Activated B cell treated with CpG ODN at 0.5 μM for 24 hours (primary cell): ENCODE measurements at regions of chr15 and their contacts with region 1.

Region 1: DNA sequence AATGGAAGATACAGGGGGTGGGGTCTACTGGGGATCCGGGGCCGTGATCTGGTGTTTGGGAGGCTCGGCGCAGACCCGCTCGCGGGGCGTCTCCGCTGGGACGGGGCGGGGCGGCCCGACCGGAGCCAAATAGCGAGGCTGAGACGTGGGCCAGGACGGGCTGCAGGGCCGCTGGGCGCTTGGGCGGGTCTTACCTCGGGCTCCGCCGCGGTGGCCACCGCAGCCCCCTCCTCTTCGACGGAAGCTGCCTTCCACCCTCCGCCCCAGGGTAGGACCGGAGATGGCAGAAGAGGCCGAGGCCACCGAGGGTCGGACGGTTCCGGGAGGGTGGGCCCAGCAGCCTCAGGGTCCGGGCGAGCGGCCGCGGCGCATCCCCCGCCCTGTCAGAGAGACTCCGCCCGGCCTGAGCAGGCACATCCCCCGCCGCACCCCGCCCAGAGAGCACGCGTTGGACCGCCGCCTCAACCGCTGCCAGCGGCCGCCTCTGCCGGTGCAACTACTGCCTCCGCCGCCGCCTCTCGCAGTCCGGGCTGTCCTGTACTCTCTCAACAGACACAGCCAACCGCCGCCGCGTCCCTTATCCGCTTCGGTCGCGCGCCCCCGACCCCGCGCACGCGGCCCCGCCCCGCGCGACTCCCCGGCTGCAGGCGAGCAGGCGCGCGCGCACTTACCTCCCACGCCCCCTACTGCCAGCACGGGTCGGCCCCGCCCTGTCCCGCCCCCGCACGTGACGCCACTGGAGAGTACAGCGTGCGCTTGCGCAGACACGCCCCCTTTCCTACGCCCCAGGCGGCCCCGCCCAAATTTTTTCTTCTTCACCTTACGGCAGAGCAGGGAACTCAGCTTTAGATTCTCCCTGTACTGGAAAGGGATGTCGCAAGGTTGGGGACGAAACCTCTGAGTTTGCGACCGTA is at the start of gene MYO9A:
- DNase-seq: peak; percentile 93
- ATAC-seq: peak; percentile 74
- H3K4me3 Mint-ChIP-seq: peak within 1 kb of the TSS; percentile 99
- H3K27ac Mint-ChIP-seq: peak within 1 kb of the TSS; percentile 99
- H3K4me1 Mint-ChIP-seq: peaks cover 33% of the 10 kb centered on the region
- H3K27me3 Mint-ChIP-seq: no peaks in the 10 kb centered on the region
- CTCF ChIP-seq: no peak
- total RNA-seq, gene MYO9A: 39.4 and 50.6 TPM in 2 replicates

Region 2: GRCh38 chr15:72009222-72009621 is 108.5 kb before region 1 on chr15:
- CTCF ChIA-PET with region 1: no interaction called
- POLR2A ChIA-PET with region 1: no interaction called
- intact Hi-C with region 1: loop called (anchors 5 kb)
- DNase-seq: no peak
- ATAC-seq: no peak
- H3K4me3 Mint-ChIP-seq: no peak overlapping the region
- H3K27ac Mint-ChIP-seq: no peak overlapping the region
- H3K4me1 Mint-ChIP-seq: peaks cover 22% of the 10 kb centered on the region
- H3K27me3 Mint-ChIP-seq: no peaks in the 10 kb centered on the region
- CTCF ChIP-seq: no peak

Region 3: GRCh38 chr15:72057548-72058091 is 60.1 kb before region 1 on chr15:
- CTCF ChIA-PET with region 1: no interaction called
- POLR2A ChIA-PET with region 1: no interaction called
- intact Hi-C with region 1: no loop called
- DNase-seq: no peak
- ATAC-seq: no peak
- H3K4me3 Mint-ChIP-seq: no peak overlapping the region
- H3K27ac Mint-ChIP-seq: no peak overlapping the region
- H3K4me1 Mint-ChIP-seq: peaks cover 12% of the 10 kb centered on the region
- H3K27me3 Mint-ChIP-seq: no peaks in the 10 kb centered on the region
- CTCF ChIP-seq: no peak

Region 4: GRCh38 chr15:72141171-72142084 is 23.7 kb after region 1 on chr15:
- CTCF ChIA-PET with region 1: no interaction called
- POLR2A ChIA-PET with region 1: interaction called, 12 read pairs
- intact Hi-C with region 1: no loop called
- DNase-seq: no peak
- ATAC-seq: peak; percentile 94
- H3K4me3 Mint-ChIP-seq: peak overlapping the region; percentile 44
- H3K27ac Mint-ChIP-seq: peak overlapping the region; percentile 87
- H3K4me1 Mint-ChIP-seq: peaks cover 15% of the 10 kb centered on the region
- H3K27me3 Mint-ChIP-seq: no peaks in the 10 kb centered on the region
- CTCF ChIP-seq: no peak

Region 5: GRCh38 chr15:72272213-72273002 is 154.7 kb after region 1 on chr15 and contains the start of gene PARP6:
- CTCF ChIA-PET with region 1: no interaction called
- POLR2A ChIA-PET with region 1: no interaction called
- intact Hi-C with region 1: loop called (anchors 1 kb)
- DNase-seq: peak; percentile 95
- ATAC-seq: peak; percentile 96
- H3K4me3 Mint-ChIP-seq: peak within 1 kb of the TSS; percentile 87
- H3K27ac Mint-ChIP-seq: peak within 1 kb of the TSS; percentile 86
- H3K4me1 Mint-ChIP-seq: peaks cover 36% of the 10 kb centered on the region
- H3K27me3 Mint-ChIP-seq: no peaks in the 10 kb centered on the region
- CTCF ChIP-seq: no peak
- total RNA-seq, gene PARP6: 70.7 and 81.4 TPM in 2 replicates

Region 6: GRCh38 chr15:72319985-72320671 is 202.4 kb after region 1 on chr15 and contains the start of gene CELF6:
- CTCF ChIA-PET with region 1: no interaction called
- POLR2A ChIA-PET with region 1: no interaction called
- intact Hi-C with region 1: loop called (anchors 2 kb)
- DNase-seq: peak; percentile 77
- ATAC-seq: peak; percentile 81
- H3K4me3 Mint-ChIP-seq: peak within 1 kb of the TSS; percentile 86
- H3K27ac Mint-ChIP-seq: peak within 1 kb of the TSS; percentile 47
- H3K4me1 Mint-ChIP-seq: peaks cover 18% of the 10 kb centered on the region
- H3K27me3 Mint-ChIP-seq: no peaks in the 10 kb centered on the region
- CTCF ChIP-seq: no peak
- total RNA-seq, gene CELF6: 2.0 and 2.2 TPM in 2 replicates

Region 7: DNA sequence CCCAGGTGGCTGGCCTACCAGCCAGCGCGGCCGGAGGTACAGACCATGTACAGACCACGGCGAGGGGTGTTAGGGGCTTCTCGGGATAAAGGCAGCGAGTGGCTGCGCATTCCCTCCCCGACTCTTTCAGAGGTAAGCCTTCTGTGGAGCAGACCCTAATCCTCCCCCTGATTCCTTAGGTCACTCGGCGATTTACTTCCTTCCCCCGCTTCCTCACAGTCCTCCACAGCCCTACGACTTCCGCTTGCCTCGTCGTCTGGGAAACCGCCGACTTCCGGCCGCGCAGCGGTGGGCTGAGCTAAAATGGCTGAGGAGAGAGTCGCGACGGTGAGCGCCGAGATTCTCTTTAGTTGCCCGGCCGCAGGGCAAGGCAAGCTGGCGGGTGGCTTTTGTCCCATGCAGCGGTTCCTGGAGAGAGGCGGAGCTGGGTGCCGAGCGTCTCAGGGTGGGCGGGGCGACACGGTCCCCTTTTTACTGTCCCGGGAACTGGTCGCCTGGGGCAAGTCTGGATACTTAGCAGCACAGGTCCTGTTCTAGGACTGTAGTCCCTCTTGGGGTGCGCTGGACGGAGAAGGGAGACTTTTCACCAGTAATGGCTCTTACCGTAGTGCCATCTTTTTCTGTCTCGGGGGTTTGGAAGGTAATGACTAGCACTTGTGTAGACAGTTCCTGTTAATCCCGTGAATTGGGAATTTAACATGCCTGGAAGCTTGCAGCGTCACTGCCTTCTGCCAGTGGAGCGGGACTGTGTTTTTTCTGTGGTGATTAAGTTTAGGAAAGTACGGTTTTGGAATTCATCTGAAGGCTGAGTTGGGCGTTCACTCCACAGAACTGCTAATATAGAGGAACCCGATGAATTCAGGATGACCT is 568.4 kb after region 1 on chr15 and contains the starts of genes BBS4 and HIGD2B:
- CTCF ChIA-PET with region 1: no interaction called
- POLR2A ChIA-PET with region 1: no interaction called
- intact Hi-C with region 1: loop called (anchors 1 kb)
- DNase-seq: peak; percentile 83
- ATAC-seq: peak; percentile 93
- H3K4me3 Mint-ChIP-seq: peak within 1 kb of the TSS; percentile 97
- H3K27ac Mint-ChIP-seq: peak within 1 kb of the TSS; percentile 93
- H3K4me1 Mint-ChIP-seq: peaks cover 20% of the 10 kb centered on the region
- H3K27me3 Mint-ChIP-seq: no peaks in the 10 kb centered on the region
- CTCF ChIP-seq: no peak
- total RNA-seq, gene BBS4: 19.4 and 21.4 TPM in 2 replicates
- total RNA-seq, gene HIGD2B: 0.20 and 0.55 TPM in 2 replicates